Activated B cell treated with CpG ODN at 0.5 μM for 24 hours (primary cell): ENCODE measurements at regions of chr9 and their contacts with region 1.

Region 1: GRCh38 chr9:79571309-79572031 is at the start of gene TLE4:
- DNase-seq: peak; percentile 94
- ATAC-seq: peak; percentile 84
- H3K4me3 Mint-ChIP-seq: peak within 1 kb of the TSS; percentile 90
- H3K27ac Mint-ChIP-seq: peak within 1 kb of the TSS; percentile 46
- H3K4me1 Mint-ChIP-seq: peaks cover 38% of the 10 kb centered on the region
- H3K27me3 Mint-ChIP-seq: no peaks in the 10 kb centered on the region
- CTCF ChIP-seq: no peak
- total RNA-seq, gene TLE4: 62.6 and 63.9 TPM in 2 replicates

Region 2: DNA sequence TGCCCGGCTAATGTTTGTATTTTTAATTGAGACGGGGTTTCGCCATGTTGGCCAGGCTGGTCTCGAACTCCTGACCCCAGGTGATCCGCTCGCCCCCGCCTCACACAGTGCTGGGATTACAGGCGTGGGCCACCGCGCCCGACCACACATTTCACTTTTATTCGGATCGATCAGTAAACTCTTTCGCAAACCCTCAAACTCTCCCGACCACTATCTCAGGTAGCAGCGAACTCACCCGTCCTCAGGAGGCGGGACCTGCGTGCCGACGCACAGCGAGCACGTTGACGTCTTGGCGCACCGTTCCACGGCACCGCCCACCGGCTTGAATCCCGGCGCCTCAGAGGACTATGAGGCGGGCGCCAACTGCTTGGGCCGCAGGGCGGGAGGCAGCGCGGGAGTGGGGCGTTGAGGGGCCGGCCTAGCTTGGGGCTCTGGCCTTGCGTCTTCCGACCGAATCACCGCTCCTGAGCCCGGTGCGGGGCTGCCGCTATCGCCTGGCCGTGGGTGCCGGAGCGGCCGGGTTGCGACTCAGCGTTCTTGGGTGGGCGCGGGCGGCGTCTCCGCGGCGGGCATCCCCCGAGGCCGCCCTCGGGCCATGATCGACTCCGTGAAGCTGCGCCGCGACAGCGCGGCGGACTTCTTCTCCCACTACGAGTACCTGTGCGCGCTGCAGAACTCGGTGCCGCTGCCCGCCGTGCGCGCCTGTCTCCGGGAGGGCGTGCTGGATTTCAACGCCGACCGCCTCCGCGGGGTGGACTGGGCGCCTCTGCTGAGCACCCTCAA is 1335.5 kb before region 1 on chr9 and contains the start of gene CEP78:
- CTCF ChIA-PET with region 1: no interaction called
- POLR2A ChIA-PET with region 1: no interaction called
- intact Hi-C with region 1: loop called (anchors 2 kb)
- DNase-seq: peak; percentile 83
- ATAC-seq: peak; percentile 98
- H3K4me3 Mint-ChIP-seq: peak within 1 kb of the TSS; percentile 97
- H3K27ac Mint-ChIP-seq: peak within 1 kb of the TSS; percentile 93
- H3K4me1 Mint-ChIP-seq: peaks cover 23% of the 10 kb centered on the region
- H3K27me3 Mint-ChIP-seq: no peaks in the 10 kb centered on the region
- CTCF ChIP-seq: no peak
- total RNA-seq, gene CEP78: 16.9 and 18.1 TPM in 2 replicates

Region 3: GRCh38 chr9:79583952-79584654 is 12.6 kb after region 1 on chr9:
- CTCF ChIA-PET with region 1: no interaction called
- POLR2A ChIA-PET with region 1: interaction called, 28 read pairs
- intact Hi-C with region 1: loop called (anchors 1 kb)
- DNase-seq: no peak
- ATAC-seq: peak; percentile 85
- H3K4me3 Mint-ChIP-seq: peak overlapping the region; percentile 30
- H3K27ac Mint-ChIP-seq: no peak overlapping the region
- H3K4me1 Mint-ChIP-seq: peaks cover 69% of the 10 kb centered on the region
- H3K27me3 Mint-ChIP-seq: no peaks in the 10 kb centered on the region
- CTCF ChIP-seq: no peak

Region 4: GRCh38 chr9:79623799-79624721 is 52.6 kb after region 1 on chr9:
- CTCF ChIA-PET with region 1: no interaction called
- POLR2A ChIA-PET with region 1: interaction called, 32 read pairs
- intact Hi-C with region 1: loop called (anchors 1 kb)
- DNase-seq: no peak
- ATAC-seq: peak; percentile 93
- H3K4me3 Mint-ChIP-seq: peak overlapping the region; percentile 61
- H3K27ac Mint-ChIP-seq: peak overlapping the region; percentile 77
- H3K4me1 Mint-ChIP-seq: peaks cover 30% of the 10 kb centered on the region
- H3K27me3 Mint-ChIP-seq: no peaks in the 10 kb centered on the region
- CTCF ChIP-seq: no peak

Region 5: GRCh38 chr9:79639354-79639753 is 67.9 kb after region 1 on chr9:
- CTCF ChIA-PET with region 1: no interaction called
- POLR2A ChIA-PET with region 1: no interaction called
- intact Hi-C with region 1: no loop called
- DNase-seq: no peak
- ATAC-seq: no peak
- H3K4me3 Mint-ChIP-seq: no peak overlapping the region
- H3K27ac Mint-ChIP-seq: no peak overlapping the region
- H3K4me1 Mint-ChIP-seq: peaks cover 10% of the 10 kb centered on the region
- H3K27me3 Mint-ChIP-seq: no peaks in the 10 kb centered on the region
- CTCF ChIP-seq: no peak

Region 6: DNA sequence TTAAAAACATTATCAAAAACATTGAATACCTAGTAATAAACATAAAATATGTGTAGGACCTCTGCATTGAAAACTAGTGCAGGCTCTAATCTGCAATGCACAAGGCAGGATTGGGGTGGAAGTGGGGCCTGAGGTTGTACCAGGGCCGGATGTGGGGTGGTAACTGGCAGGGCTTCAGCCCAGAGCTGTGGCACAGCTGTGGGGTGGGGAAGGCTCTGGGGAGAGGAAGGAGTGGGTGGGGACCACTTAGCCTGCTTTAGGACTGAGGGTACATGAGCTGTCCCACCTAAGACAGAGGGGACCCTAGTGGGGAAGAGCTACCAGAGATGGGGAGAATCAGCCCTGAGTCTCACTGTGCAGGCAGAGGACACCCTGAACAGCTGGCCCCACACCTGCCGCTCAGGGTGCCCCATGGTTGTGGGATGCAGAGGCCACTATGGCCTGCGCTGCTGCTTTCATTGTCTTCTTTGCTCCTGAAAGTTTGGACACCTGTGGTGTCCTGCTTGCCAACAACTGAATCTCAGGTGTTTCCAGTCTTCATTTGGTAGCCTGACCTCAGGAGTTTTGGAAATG is 311.7 kb after region 1 on chr9:
- CTCF ChIA-PET with region 1: no interaction called
- POLR2A ChIA-PET with region 1: interaction called, 14 read pairs
- intact Hi-C with region 1: loop called (anchors 1 kb)
- DNase-seq: peak; percentile 42
- ATAC-seq: peak; percentile 69
- H3K4me3 Mint-ChIP-seq: peak overlapping the region; percentile 72
- H3K27ac Mint-ChIP-seq: peak overlapping the region; percentile 69
- H3K4me1 Mint-ChIP-seq: peaks cover 75% of the 10 kb centered on the region
- H3K27me3 Mint-ChIP-seq: no peaks in the 10 kb centered on the region
- CTCF ChIP-seq: no peak

Region 7: GRCh38 chr9:80156756-80157472 is 585.4 kb after region 1 on chr9:
- CTCF ChIA-PET with region 1: no interaction called
- POLR2A ChIA-PET with region 1: interaction called, 12 read pairs
- intact Hi-C with region 1: loop called (anchors 5 kb)
- DNase-seq: no peak
- ATAC-seq: peak; percentile 88
- H3K4me3 Mint-ChIP-seq: no peak overlapping the region
- H3K27ac Mint-ChIP-seq: peak overlapping the region; percentile 73
- H3K4me1 Mint-ChIP-seq: peaks cover 51% of the 10 kb centered on the region
- H3K27me3 Mint-ChIP-seq: no peaks in the 10 kb centered on the region
- CTCF ChIP-seq: no peak